Activated CD4-positive, alpha-beta T cell treated with anti-CD3 and anti-CD28 coated beads, Interleukin-2, amount 10 ng/mL, durations not matched to agents 7 days and 5 days (primary cell): ENCODE measurements at regions of chr1 and their contacts with region 1.

Region 1: DNA sequence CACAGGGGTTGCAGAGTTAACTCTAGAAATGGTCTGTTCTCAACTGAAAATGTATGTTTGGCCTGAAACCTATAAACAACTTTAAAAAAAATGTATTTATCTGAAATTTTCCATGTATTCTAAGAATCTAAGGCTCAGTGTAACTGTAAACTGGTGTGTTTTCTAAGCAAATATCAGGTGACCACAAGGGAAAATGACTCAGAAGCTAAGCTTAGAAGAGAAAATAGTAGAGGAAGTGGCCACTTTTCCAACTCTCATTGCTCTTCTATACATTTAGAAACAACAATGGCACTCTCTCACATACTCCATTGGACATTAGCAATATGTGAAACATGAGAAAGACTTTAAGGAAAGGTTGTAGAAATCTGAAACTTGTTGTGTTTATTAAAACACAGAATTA is 7.5 kb downstream of the TNFSF18 start:
- DNase-seq: no peak
- H3K4me3 Mint-ChIP-seq: no peak overlapping the region
- H3K27ac Mint-ChIP-seq: no peak overlapping the region
- H3K4me1 Mint-ChIP-seq: peaks cover 22% of the 10 kb centered on the region
- H3K27me3 Mint-ChIP-seq: peaks cover 3% of the 10 kb centered on the region

Region 2: DNA sequence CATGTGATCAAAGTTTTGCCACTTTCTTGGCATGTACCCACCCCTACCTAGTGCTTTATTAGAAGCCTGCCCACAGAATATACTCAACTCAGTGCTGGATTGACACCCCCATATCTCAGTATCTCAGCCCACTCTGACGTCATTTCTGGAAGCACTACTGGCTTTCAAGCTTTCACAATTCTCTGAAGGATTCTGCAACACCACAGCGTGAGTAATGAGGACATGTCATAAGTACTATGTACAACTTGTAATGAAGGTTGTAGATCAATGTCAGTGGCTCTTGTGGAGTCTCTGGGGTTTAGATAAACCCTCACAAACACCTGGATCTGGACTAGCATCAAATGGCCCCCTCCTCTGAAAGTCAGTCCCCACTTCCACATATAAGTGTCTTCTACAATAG is 106.6 kb after region 1 on chr1:
- CTCF ChIA-PET with region 1: no interaction called
- POLR2A ChIA-PET with region 1: interaction called, 10 read pairs
- DNase-seq: no peak
- H3K4me3 Mint-ChIP-seq: no peak overlapping the region
- H3K27ac Mint-ChIP-seq: no peak overlapping the region
- H3K4me1 Mint-ChIP-seq: peaks cover 5% of the 10 kb centered on the region
- H3K27me3 Mint-ChIP-seq: peaks cover 14% of the 10 kb centered on the region